ENCODE measurements at regions of chr3 and their contacts with region 1.

Region 1: DNA sequence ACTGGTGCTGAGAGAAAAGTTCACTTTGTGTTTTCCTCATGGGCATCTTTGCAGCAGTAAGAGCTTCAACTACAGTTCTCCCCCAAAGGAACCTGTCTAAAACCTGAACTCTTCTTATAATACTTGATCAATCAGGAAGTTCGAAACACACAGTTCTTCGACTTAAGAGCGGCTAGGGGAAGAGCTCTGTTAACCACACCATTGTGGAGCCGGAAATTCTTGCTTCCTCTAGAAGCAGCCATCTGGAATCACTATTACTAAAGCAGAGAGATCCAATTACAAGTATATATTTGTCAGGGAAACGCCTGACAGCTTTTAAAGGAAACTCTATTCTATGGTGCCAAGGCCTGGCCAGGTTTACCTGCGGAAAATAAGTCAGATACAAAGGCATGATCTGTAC is 337.3 kb upstream of the CBLB start:
- DNase-seq: no peak
- ATAC-seq: peak; percentile 39

Region 2: DNA sequence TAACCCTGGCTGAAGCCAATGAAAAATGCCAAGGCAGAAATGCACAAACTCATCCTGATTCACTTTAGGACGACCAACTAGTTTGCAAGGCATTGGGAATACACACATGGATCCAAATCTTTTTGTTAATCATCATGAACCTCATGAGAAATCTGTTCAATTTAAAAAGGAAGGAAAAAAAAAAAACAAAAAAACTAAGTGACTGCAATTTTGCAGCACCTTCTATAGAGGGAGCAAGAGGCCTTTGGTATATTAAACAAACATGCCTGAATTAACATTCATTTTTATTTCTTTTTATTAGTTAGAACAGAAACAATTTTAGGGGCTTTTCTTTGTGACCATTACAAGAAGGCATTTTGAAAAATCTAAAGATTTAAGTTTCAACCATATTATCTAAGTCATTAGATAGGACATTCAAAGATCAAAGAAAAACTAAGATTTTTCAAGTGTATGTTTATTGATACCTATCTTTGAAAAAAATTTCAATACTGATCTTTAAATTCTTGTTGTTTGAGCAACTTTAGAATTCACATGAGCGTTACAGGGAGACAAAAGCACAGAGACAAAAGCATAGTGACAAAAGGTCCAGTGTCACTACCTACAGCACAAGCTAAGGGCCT is 519.8 kb before region 1 on chr3:
- intact Hi-C with region 1: loop called (anchors 10 kb)
- DNase-seq: no peak
- ATAC-seq: no peak

Region 3: DNA sequence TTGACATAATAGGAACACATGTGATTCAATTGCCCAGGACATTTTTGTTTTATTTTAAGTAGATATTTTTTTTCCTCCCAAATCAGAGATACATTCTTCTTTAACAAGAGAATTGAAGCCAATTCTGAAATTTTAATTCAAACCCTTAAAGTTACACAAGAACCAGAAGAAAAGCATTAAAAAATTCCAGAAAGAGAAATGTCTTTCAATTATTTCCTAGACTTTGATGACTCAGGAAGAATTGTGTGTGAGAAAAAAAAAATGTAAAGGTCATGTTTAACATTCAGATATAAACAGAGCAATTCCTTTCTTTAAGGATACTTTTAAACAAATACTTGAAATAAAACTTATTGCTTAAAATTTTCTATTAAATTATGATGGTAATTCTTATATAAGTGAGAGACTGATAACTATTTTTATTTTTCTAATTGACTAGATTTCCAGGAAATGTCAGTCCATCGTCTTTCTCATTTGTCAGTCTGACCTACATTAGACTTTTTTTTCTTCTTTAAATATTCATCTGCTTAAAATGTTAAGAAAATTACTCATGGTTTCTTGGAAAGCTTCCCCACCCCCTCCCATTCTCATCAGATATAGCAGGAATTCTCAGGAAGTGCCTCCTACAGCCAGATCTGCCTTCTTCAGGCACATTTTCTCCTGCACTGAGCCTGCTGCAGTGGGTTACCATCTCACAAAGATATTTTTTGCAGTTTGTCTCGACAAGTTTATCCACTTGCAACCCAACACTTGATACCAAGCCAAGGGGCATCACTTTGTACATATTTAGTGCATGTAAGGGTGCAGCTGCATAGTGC is 75.6 kb before region 1 on chr3:
- intact Hi-C with region 1: loop called (anchors 5 kb)
- DNase-seq: no peak
- ATAC-seq: no peak

Region 4: DNA sequence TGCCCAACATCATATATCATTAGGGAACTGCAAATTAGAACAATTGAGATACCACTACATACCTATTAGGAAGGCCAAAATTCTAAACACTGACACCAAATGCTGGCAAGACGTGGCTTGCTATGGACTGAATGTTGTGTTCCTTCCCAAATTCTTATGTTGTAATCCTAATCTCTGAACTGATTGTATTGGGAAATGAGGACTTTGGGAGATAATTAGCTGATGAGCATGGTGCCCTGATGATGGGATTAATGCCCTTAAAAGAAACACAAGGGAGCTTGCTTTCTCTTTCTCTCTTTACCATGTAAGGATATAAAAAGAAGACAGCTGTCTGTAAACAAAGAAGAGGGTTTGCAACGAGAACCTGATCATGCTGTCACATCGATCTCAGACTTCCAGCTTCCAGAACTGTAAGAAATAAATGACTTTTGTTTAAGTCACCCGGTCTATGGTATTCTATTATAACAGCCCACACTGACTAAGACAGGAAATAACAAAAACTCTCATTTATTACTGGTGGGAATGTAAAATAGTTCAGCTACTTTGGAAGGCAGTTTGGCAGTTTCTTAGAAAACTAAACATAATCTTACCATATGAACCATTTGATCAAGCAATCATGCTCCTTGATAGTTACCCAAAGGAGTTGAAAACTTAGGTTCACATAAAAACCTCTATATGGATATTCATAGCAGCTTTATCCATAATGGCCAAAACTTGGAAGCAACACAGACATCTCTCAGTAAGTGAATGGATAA is 121.0 kb after region 1 on chr3:
- intact Hi-C with region 1: no loop called
- DNase-seq: no peak
- ATAC-seq: no peak

Region 5: GRCh38 chr3:106392915-106393314 is 186.8 kb after region 1 on chr3:
- intact Hi-C with region 1: no loop called
- DNase-seq: no peak
- ATAC-seq: no peak

Measured in Right ventricle myocardium inferior (tissue), 1 donor.